ENCODE measurements at regions of chr15 and their contacts with region 1.

Region 1: GRCh38 chr15:34437687-34438086 is at the start of gene GOLGA8A:
- DNase-seq: no peak
- total RNA-seq, gene GOLGA8A: 26.7 TPM

Region 2: DNA sequence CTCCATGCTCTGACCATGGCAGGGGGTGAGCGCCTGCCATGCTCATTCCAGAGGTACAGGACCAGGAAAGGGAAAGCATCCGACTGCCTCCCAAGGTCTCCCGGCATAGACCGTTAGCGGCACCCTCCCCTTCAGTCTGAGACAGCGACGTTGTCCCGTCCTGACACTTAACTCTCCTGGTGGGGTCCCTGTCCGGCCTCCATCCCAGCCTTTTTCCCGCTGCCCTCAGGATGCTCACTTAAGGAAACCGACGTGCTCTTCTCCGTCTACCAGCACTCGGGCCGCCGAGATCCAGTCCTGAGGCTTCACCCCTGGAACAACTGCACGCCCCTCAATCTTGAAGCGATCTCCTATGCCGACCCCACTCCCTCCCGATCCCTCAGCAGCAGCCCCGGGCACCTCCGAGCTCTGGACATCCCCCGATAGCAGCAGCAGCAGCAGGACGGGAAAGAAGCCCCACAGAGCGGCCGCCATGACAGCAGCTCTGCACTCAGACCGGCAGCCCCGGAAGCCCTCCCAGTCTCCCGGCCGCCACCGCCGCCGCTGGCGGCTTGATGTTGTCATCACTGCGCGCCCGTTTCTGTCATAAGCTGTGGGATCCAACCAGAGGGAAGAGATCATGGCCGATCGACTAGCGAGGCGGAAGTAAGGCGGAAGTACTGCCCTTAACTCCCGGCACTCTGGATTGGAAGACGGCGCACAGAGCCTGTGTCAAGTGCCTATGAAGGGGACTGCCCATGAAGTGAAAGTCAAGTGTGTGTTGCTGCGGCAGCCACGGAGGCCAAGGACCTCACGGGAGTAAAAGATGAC is 336.1 kb before region 1 on chr15 and contains the starts of genes EMC7 and PGBD4:
- intact Hi-C with region 1: no loop called
- DNase-seq: peak; percentile 99
- total RNA-seq, gene EMC7: 55.6 TPM
- total RNA-seq, gene PGBD4: 1.5 TPM

Region 3: GRCh38 chr15:34583399-34584329 is 146.0 kb after region 1 on chr15 and contains the start of gene GOLGA8B:
- intact Hi-C with region 1: loop called (anchors 5 kb)
- DNase-seq: peak; percentile 82
- total RNA-seq, gene GOLGA8B: 36.9 TPM

Measured in cardiac septum (tissue), 1 donor.